Prostate gland (tissue), 2 donors: ENCODE measurements at regions of chr7 and their contacts with region 1.

Region 1: GRCh38 chr7:10418985-10419384 is 554.7 kb upstream of the PHF14 start:
- DNase-seq: no peak
- H3K4me3 ChIP-seq: no peak overlapping the region
- H3K27ac ChIP-seq: no peak overlapping the region
- H3K4me1 ChIP-seq: no peaks in the 10 kb centered on the region
- H3K27me3 ChIP-seq: no peaks in the 10 kb centered on the region
- CTCF ChIP-seq: no peak
- POLR2A ChIP-seq: no peak

Region 2: GRCh38 chr7:8423057-8423456 is 1995.9 kb before region 1 on chr7:
- intact Hi-C with region 1: loop called (anchors 5 kb)
- DNase-seq: no peak
- H3K4me3 ChIP-seq: no peak overlapping the region
- H3K27ac ChIP-seq: no peak overlapping the region
- H3K4me1 ChIP-seq: no peaks in the 10 kb centered on the region
- H3K27me3 ChIP-seq: no peaks in the 10 kb centered on the region
- CTCF ChIP-seq: no peak
- POLR2A ChIP-seq: no peak